Activated CD4-positive, alpha-beta memory T cell treated with anti-CD3 and anti-CD28 coated beads for 36 hours (primary cell): ENCODE measurements at regions of chr11 and their contacts with region 1.

Region 1: DNA sequence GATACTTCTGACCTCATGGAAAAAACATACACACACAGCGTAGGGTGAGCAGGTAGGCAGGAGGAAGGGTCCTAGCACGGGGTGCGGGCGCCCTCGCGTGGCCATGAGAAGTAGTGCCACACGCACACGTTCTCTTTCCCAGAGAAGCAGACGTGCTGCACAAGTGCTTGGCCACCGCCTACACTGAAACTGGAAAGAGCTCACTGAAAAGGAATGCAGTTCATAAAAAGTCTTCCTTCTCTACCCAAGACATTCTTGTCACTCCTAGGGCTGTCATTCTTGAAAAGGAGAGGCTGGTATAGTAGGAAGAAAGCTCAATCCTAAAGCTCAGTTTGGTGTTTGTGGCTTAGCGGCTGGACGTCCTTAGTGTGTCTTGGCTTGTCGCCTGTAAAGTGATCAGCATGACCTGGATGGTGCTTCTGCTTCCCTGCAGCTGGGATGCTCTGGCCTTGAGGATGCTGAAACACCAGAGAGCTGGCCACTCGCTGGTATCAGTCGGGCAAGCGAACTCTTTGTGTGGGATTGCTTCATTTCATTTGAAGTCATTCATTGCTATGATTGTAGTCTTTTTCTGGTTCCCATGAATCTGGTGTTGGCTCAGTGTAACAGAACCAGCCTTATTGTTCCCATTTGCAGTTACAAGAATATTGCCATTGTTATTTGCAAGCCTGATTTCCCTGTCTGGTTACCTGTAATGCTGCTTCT is 303.8 kb downstream of the NTM start:
- DNase-seq: peak; percentile 65
- H3K4me3 Mint-ChIP-seq: no peak overlapping the region
- H3K27ac Mint-ChIP-seq: no peak overlapping the region
- H3K4me1 Mint-ChIP-seq: no peaks in the 10 kb centered on the region
- H3K27me3 Mint-ChIP-seq: no peaks in the 10 kb centered on the region

Region 2: GRCh38 chr11:131064373-131064991 is 609.7 kb before region 1 on chr11:
- CTCF ChIA-PET with region 1: interaction called, 11 read pairs
- POLR2A ChIA-PET with region 1: no interaction called
- intact Hi-C with region 1: no loop called
- DNase-seq: peak; percentile 34
- H3K4me3 Mint-ChIP-seq: no peak overlapping the region
- H3K27ac Mint-ChIP-seq: no peak overlapping the region
- H3K4me1 Mint-ChIP-seq: no peaks in the 10 kb centered on the region
- H3K27me3 Mint-ChIP-seq: peaks cover 10% of the 10 kb centered on the region

Region 3: DNA sequence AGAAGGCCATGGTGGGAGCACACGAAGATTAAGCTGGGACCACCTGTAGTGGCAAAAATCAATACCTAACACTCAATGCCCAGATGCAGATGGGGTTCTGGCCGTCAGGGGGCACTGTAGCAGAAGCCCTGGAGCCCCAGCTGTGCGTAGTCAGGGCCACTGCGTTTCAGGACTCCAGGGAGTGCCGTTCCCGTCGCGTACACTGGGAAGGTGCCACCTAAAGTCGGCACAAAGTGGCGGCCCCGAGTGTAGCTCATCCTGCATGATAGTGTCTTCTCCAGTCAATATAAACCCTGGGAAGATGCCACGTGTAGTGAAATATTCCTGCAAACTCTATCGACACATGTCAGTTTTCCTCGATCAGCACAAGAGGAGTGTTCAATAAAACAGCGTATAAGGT is 427.5 kb before region 1 on chr11:
- CTCF ChIA-PET with region 1: interaction called, 5 read pairs
- POLR2A ChIA-PET with region 1: no interaction called
- intact Hi-C with region 1: loop called (anchors 2 kb)
- DNase-seq: peak; percentile 11
- H3K4me3 Mint-ChIP-seq: no peak overlapping the region
- H3K27ac Mint-ChIP-seq: no peak overlapping the region
- H3K4me1 Mint-ChIP-seq: no peaks in the 10 kb centered on the region
- H3K27me3 Mint-ChIP-seq: peaks cover 2% of the 10 kb centered on the region

Region 4: DNA sequence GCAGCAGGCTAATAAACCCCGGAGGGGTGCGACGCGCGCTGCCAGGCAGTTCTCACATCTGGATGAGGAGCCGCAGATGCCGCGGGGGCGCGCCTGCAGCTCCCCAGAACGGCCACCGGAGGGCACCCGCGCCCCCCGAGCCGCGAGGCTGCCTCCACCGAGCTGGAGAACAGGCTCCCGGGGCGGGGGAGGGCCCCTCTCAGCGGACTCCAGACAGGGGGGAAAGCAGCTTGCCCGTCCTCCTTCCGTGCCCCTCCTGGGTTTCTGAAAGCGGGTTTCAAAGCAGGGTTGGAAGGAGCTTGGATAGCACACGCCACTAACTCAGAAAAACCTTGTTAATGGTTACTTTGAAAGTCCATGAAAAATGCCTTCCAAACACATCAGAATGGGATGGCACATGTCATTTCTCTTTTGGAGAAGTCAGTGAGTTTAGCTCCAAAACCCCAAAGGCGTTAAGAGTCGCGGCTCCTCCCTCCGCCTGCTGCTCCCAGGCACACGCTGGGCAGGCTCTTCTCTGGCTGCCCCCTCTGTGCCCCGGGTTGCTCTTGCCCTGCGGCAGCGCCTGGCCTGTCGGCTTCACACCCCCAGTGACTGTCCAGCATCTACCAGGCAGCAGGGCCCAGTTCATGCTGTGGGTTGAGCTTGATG is 14.0 kb after region 1 on chr11:
- CTCF ChIA-PET with region 1: interaction called, 16 read pairs
- POLR2A ChIA-PET with region 1: no interaction called
- intact Hi-C with region 1: no loop called
- DNase-seq: peak; percentile 45
- H3K4me3 Mint-ChIP-seq: no peak overlapping the region
- H3K27ac Mint-ChIP-seq: no peak overlapping the region
- H3K4me1 Mint-ChIP-seq: no peaks in the 10 kb centered on the region
- H3K27me3 Mint-ChIP-seq: peaks cover 12% of the 10 kb centered on the region